ENCODE measurements at regions of chr11 and their contacts with region 1.

Region 1: GRCh38 chr11:62394825-62395538 is 23.9 kb upstream of the SCGB1A1 start:
- DNase-seq: peak; percentile 74 to 94 (median 93)
- H3K4me3 ChIP-seq: peak overlapping the region; percentile 40 to 63 (median 52)
- H3K27ac ChIP-seq: peak overlapping the region in 1 of 2 donors; percentile 9
- H3K4me1 ChIP-seq: peaks cover 0 to 10% (median 0%) of the 10 kb centered on the region in 3 donors
- H3K27me3 ChIP-seq: no peaks in the 10 kb centered on the region
- CTCF ChIP-seq: peak; percentile 79

Region 2: GRCh38 chr11:62508268-62509058 is 113.5 kb after region 1 on chr11:
- intact Hi-C with region 1: no loop called
- DNase-seq: peak; percentile 86 to 94 (median 92)
- H3K4me3 ChIP-seq: peak overlapping the region in 2 of 3 donors; percentile 4 to 41
- H3K27ac ChIP-seq: peak overlapping the region; percentile 77 to 86
- H3K4me1 ChIP-seq: peaks cover 0 to 14% (median 12%) of the 10 kb centered on the region in 3 donors
- H3K27me3 ChIP-seq: no peaks in the 10 kb centered on the region
- CTCF ChIP-seq: peak; percentile 46

Region 3: GRCh38 chr11:62694455-62695167 is 299.6 kb after region 1 on chr11:
- intact Hi-C with region 1: loop called (anchors 10 kb)
- DNase-seq: peak in 4 of 5 donors; percentile 71 to 93 (median 78)
- H3K4me3 ChIP-seq: no peak overlapping the region
- H3K27ac ChIP-seq: no peak overlapping the region
- H3K4me1 ChIP-seq: no peaks in the 10 kb centered on the region
- H3K27me3 ChIP-seq: no peaks in the 10 kb centered on the region
- CTCF ChIP-seq: peak; percentile 75

Measured in kidney (tissue), 22 donors.